Caco-2 (cell line): ENCODE measurements at regions of chr1 and their contacts with region 1.

Region 1: DNA sequence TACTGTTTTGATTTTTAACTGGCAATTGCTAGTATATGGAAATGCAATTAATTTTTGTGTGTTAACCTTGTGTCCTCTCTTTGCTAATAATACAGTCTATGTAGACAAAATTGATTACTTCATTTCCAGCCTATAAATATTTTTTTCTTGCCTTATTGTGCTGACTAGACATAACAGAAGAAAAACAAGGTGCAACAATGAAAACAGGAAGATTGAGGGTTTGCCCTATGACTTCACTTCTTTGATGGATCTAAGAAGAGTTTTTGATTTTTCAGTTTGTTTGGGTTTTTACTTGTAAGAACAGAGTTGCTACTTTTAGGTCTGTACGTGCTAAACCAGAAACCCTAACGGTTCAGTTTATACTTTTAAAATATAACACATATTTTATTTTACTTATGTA is 8.5 kb upstream of the CNIH4 start:
- DNase-seq: no peak
- H3K4me3 ChIP-seq: no peak overlapping the region
- H3K4me3 Mint-ChIP-seq: no peak overlapping the region
- H3K27ac Mint-ChIP-seq: no peak overlapping the region
- H3K4me1 ChIP-seq: no peaks in the 10 kb centered on the region
- H3K4me1 Mint-ChIP-seq: no peaks in the 10 kb centered on the region
- H3K27me3 ChIP-seq: no peaks in the 10 kb centered on the region
- H3K27me3 Mint-ChIP-seq: no peaks in the 10 kb centered on the region
- CTCF ChIP-seq: no peak

Region 2: GRCh38 chr1:224132901-224133300 is 215.2 kb before region 1 on chr1:
- CTCF ChIA-PET with region 1: no interaction called
- POLR2A ChIA-PET with region 1: no interaction called
- intact Hi-C with region 1: no loop called
- DNase-seq: no peak
- H3K4me3 ChIP-seq: no peak overlapping the region
- H3K4me3 Mint-ChIP-seq: no peak overlapping the region
- H3K27ac Mint-ChIP-seq: no peak overlapping the region
- H3K4me1 ChIP-seq: peaks cover 3% of the 10 kb centered on the region; the same call in 1 of the 2 replicates
- H3K4me1 Mint-ChIP-seq: no peaks in the 10 kb centered on the region
- H3K27me3 ChIP-seq: no peaks in the 10 kb centered on the region
- H3K27me3 Mint-ChIP-seq: no peaks in the 10 kb centered on the region
- CTCF ChIP-seq: no peak

Region 3: DNA sequence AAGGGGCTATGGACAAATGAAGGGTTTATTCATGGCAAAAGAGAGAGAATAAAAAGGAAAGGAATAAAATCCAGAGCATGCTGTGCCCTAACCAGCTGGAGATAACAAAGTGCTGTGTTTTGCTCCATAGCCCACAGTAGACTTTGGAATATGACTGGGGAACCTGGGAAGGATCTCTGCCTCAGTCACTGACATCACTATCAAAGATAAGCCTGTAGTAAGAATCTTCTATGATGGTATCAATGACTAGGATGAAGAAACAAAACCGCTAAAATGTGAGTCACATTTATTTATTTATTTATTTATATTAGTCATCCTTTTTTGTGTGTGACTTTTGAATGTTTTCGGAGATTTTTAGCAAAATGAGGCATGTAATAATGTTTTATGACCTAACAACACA is 74.5 kb before region 1 on chr1:
- CTCF ChIA-PET with region 1: no interaction called
- POLR2A ChIA-PET with region 1: interaction called, 13 read pairs
- intact Hi-C with region 1: no loop called
- DNase-seq: no peak
- H3K4me3 ChIP-seq: no peak overlapping the region
- H3K4me3 Mint-ChIP-seq: no peak overlapping the region
- H3K27ac Mint-ChIP-seq: no peak overlapping the region
- H3K4me1 ChIP-seq: no peaks in the 10 kb centered on the region
- H3K4me1 Mint-ChIP-seq: no peaks in the 10 kb centered on the region
- H3K27me3 ChIP-seq: no peaks in the 10 kb centered on the region
- H3K27me3 Mint-ChIP-seq: no peaks in the 10 kb centered on the region
- CTCF ChIP-seq: no peak

Region 4: DNA sequence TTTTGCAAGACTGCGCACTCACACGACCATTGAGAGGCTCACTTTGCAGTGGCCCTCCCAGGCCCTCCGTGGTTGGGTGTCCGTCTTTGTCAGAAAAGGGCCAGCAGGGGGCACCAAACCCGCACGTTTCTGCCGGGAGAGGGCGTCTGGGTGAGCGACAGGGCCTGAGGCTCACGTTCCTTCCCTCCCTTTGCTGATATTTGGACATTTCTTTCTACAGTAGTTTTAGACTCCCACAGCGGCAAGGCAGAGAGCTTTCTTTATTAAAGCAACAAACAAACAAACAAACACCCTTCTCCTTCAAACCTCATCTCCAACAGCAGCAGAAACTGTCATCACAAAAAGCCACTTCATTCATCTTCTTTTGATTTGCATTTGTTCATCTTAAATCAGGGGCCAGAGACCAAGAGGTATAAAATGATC is 165.7 kb after region 1 on chr1:
- CTCF ChIA-PET with region 1: no interaction called
- POLR2A ChIA-PET with region 1: no interaction called
- intact Hi-C with region 1: no loop called
- DNase-seq: peak; percentile 85 to 90
- H3K4me3 ChIP-seq: no peak overlapping the region
- H3K4me3 Mint-ChIP-seq: no peak overlapping the region
- H3K27ac Mint-ChIP-seq: no peak overlapping the region
- H3K4me1 ChIP-seq: peaks cover 8% of the 10 kb centered on the region; the same call in 1 of the 2 replicates
- H3K4me1 Mint-ChIP-seq: no peaks in the 10 kb centered on the region
- H3K27me3 ChIP-seq: no peaks in the 10 kb centered on the region
- H3K27me3 Mint-ChIP-seq: no peaks in the 10 kb centered on the region
- CTCF ChIP-seq: peak; percentile 95 to 99